Motor neuron (in vitro differentiated cells): ENCODE measurements at regions of chr7 and their contacts with region 1.

Region 1: GRCh38 chr7:120987683-120988590 is 574 bp upstream of the CPED1 start:
- ATAC-seq: peak; percentile 71 to 93 (median 78)
- H3K4me3 ChIP-seq: peak overlapping the region; percentile 21 to 33 (median 28)
- H3K27ac ChIP-seq: no peak overlapping the region
- H3K4me1 ChIP-seq: no peaks in the 10 kb centered on the region

Region 2: DNA sequence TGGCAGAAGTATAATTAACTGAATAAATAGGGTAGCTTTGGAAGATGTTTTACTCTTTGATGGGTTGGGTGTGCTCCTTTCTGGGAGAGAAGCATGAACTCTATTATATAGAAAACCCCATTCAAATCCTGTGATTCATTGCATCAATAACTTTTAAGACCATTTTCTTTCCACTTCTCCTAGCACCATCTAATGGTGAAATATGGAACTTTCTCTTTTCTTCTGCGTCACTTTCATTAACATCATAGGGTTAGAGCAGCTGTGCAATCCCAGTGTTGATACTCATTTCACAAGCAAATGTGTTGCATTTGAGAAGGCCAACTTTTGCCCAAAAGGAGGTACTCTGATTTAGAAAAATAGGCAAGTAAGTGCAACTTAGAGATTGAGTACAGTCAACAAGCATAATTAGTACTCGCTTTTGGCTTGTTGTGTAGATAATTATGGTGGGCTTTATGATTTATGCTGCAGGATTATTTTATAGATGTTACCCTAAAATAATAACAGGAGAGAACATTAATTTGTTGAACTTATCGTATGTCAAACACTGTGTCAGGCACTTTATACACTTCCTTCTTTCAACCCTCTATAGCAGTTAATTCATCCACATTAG is 93.5 kb after region 1 on chr7:
- in situ Hi-C with region 1: loop called in 2 of 9 experiments (anchors 25 kb)
- ATAC-seq: peak in 7 of 8 experiments; percentile 20 to 72 (median 41)
- H3K4me3 ChIP-seq: no peak overlapping the region
- H3K27ac ChIP-seq: no peak overlapping the region
- H3K4me1 ChIP-seq: no peaks in the 10 kb centered on the region

Region 3: GRCh38 chr7:121107923-121108498 is 120.1 kb after region 1 on chr7:
- in situ Hi-C with region 1: loop called in 1 of 9 experiments (anchors 10 kb)
- ATAC-seq: peak; percentile 57 to 93 (median 78)
- H3K4me3 ChIP-seq: no peak overlapping the region
- H3K27ac ChIP-seq: no peak overlapping the region
- H3K4me1 ChIP-seq: peaks cover 3 to 16% of the 10 kb centered on the region in 2 donors

Region 4: DNA sequence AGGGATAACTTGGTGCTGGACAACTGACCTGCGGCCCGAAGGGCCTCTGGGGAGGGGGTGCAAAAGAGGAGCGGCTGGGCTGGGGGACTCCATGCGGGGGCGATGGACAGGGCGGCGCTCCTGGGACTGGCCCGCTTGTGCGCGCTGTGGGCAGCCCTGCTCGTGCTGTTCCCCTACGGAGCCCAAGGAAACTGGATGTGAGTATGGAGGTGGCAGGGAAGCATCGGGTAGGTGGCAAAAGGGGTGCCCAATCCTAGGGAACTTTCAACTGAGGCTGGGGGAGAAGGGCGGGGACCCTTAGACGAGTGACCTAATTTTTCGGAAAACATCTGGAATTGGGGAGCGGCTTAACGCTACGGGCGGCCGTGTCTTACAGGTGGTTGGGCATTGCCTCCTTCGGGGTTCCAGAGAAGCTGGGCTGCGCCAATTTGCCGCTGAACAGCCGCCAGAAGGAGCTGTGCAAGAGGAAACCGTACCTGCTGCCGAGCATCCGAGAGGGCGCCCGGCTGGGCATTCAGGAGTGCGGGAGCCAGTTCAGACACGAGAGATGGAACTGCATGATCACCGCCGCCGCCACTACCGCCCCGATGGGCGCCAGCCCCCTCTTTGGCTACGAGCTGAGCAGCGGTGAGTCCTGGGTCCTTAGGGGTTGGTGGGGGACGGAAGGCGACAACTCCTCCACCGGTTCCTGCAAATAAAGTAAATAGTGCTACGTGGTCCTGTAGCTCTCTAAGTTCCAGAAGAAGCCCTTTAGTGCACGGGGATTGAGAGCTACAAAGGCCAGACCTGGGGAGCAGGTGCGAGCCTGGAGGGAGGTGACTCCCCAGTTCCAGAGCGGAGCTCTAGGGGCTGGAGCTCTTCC is 341.5 kb after region 1 on chr7:
- in situ Hi-C with region 1: loop called in 1 of 9 experiments (anchors 25 kb)
- ATAC-seq: peak; percentile 22 to 81 (median 50)
- H3K4me3 ChIP-seq: peak overlapping the region; percentile 14 to 42 (median 31)
- H3K27ac ChIP-seq: no peak overlapping the region
- H3K4me1 ChIP-seq: peaks cover 0 to 6% of the 10 kb centered on the region in 2 donors